Dendritic cell treated with granulocyte-macrophage colony-stimulating factor and Interleukin-4, amounts not matched to agents 40 ng/mL and 50 ng/mL, for 4 days (primary cell): ENCODE measurements at regions of chr11 and their contacts with region 1.

Region 1: DNA sequence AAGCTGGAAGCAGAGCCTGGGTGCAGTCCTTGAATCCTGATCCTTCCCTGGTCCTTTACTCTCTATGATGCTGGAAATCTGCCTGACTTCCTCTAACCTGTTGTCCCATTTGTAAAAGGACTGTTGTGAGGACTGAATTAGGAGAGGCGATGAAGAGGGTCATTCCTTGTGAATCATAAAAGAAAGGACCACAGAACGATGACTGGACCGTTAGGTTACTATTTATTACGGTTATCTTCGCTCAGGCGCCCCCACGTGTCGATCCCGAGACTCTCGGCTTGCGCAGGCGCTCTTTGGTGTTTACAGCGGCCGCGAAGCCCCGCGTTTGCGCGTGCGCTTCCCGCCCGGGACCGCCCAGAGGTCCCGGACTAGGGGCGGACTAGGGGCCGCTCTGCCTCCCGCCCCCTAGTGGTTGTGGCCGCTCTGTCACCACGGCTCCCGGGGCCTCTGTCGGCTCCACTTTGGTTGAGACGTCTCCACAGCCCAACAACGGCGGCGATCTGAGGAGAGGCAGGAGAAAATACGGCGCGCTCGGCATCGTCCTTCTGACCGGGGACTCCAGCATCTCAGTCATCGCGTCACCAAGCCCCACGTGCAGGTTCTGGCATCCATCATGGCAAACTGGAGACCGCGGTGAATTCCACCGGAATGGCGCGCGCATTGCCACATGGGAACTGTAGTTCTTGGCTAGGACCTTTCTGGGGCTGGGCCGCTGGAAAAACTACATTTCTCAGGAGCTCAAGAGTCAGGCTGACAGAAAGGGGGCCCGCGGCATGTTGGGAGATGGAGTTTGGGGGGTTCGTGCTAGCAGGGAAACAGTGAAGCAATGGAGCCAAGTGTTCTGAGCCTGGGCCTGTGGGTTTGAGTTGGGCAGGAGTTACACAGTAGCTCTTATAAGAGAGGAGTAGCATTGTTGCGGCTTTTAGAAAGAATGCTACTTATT is at the start of gene STARD10:
- H3K4me3 Mint-ChIP-seq: peak within 1 kb of the TSS; percentile 95
- H3K27ac Mint-ChIP-seq: peak within 1 kb of the TSS; percentile 93
- H3K4me1 Mint-ChIP-seq: peaks cover 47% of the 10 kb centered on the region
- H3K27me3 Mint-ChIP-seq: no peaks in the 10 kb centered on the region

Region 2: GRCh38 chr11:72752088-72752914 is 41.4 kb before region 1 on chr11 and contains the start of gene ARAP1:
- intact Hi-C with region 1: no loop called
- H3K4me3 Mint-ChIP-seq: peak within 1 kb of the TSS; percentile 89
- H3K27ac Mint-ChIP-seq: peak within 1 kb of the TSS; percentile 90
- H3K4me1 Mint-ChIP-seq: peaks cover 83% of the 10 kb centered on the region
- H3K27me3 Mint-ChIP-seq: peaks cover 8% of the 10 kb centered on the region

Region 3: DNA sequence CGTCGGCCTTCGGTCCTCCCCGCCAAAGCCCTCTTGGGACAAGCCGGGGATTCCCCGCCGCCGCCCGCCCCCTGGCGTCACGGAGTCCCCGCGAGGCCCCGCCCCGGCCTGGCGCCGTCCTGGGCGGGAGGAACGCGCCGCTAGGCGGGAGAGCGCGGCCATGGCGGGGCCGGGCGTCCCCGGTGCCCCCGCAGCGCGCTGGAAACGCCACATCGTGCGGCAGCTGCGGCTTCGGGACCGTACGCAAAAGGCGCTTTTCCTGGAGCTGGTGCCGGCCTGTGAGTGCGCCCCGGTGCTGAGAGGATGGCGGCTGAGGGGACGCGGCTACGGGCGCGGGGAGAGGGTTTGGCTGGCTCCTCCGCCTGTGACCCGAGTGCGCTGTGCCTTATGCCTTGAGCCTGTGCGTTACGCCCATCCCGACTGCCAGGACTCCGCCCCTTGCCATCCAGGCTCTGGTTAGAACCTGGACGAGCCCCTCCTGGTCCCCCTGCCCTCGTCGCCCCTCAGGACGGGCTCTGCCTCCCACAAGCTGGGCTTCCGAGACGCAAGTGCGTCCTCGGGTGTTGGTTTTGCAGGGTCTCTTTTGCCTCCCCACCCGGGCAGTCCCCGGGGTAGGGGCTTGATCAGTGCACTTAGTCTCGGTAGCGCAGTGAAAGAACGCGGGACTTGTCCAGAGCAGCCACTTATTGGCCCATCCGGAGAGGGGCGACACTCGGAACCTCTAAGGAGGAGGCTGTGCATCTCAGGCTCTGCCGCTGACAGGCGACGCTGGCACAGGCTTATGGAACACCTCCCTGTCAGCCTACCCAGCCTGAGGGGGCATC is 20.8 kb after region 1 on chr11 and contains the start of gene ATG16L2:
- intact Hi-C with region 1: loop called (anchors 2 kb)
- H3K4me3 Mint-ChIP-seq: peak within 1 kb of the TSS; percentile 96
- H3K27ac Mint-ChIP-seq: peak within 1 kb of the TSS; percentile 90
- H3K4me1 Mint-ChIP-seq: peaks cover 78% of the 10 kb centered on the region
- H3K27me3 Mint-ChIP-seq: no peaks in the 10 kb centered on the region